HEK293 (cell line): ENCODE measurements at regions of chr2 and their contacts with region 1.

Region 1: DNA sequence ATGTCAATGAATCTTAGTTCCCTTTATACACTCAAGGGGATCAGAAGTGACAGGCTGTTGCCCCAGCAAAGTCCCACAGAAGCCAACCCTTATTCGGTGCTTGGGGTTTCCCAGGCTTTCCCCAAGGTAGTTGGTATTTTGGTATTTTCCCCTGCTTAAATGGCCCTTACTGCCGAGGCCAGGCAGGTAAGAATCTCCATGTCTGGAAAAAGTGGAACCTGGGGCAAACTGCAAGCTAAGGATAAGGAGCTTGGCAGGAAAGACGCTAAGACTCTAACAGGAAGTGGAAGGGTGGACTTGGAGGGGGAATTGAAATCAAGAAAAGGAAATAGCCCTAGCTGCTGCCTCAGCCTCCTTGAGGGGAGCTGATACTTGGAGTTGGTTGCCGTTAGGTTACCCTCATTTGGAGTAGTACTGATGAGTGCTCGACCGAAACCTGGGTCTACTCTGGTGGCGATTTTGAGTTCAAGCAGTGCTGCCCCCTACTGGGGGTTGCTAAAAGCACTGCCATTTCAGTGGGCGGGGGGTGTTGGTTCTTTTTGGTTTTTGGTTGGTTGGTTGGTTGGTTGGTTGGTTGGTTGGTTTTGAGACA is 3.3 kb upstream of the GPBAR1 start:
- H3K4me3 ChIP-seq: no peak overlapping the region
- H3K27ac ChIP-seq: no peak overlapping the region
- H3K4me1 ChIP-seq: no peaks in the 10 kb centered on the region; the same call in 1 of the 2 replicates
- CTCF ChIP-seq: peak; percentile 57

Region 2: GRCh38 chr2:218186355-218186766 is 71.1 kb before region 1 on chr2:
- CTCF ChIA-PET with region 1: interaction called, 10 read pairs
- POLR2A ChIA-PET with region 1: no interaction called
- H3K4me3 ChIP-seq: no peak overlapping the region
- H3K27ac ChIP-seq: no peak overlapping the region
- H3K4me1 ChIP-seq: no peaks in the 10 kb centered on the region
- CTCF ChIP-seq: no peak; the same call in 1 of the 2 replicates

Region 3: GRCh38 chr2:218245214-218245613 is 12.3 kb before region 1 on chr2:
- CTCF ChIA-PET with region 1: interaction called, 12 read pairs
- POLR2A ChIA-PET with region 1: no interaction called
- H3K4me3 ChIP-seq: no peak overlapping the region
- H3K27ac ChIP-seq: no peak overlapping the region
- H3K4me1 ChIP-seq: no peaks in the 10 kb centered on the region
- CTCF ChIP-seq: no peak